ENCODE measurements at regions of chr20 and their contacts with region 1.

Region 1: DNA sequence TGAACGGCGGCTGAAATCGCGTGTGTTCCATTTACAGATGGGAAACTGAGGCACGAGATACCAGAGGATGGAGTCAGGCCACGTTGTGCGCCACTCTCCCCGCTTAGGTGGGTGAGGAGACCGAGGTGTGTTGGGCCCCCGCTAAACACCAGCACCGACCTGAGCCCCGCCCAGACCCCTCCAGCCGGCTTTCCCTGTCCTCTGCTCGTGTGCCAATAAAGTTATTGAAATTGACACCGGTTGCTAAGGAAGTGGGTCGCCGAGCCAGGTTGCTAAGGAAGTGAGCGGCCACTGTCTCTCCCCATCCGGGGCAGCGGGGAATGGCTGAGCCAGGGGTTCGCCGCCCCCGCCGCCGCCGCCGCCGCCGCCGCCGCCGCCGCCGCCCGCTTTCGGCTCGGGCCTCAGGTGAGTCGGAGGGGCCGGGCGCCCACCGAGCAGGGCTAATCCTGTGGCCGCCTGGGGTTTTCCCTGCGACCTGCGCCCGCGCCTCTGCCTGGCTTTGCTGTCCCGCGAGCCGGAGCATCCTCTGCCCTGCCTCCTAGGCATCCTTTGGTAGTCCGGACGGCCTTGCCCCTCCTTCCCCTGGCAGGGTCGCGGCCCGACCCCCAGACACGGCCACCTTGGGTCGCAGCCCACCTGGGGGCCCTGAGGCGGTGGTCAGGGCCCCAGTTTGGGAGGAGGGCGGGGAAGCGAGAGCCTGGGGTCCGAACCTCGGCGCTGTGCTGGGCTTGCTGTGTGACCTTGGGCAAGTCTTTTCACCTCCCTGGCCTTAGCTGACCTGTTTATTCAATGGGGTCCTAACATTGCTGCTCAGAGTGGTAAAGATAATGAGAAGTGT is at the start of gene KIF3B:
- DNase-seq: peak; percentile 72 to 90
- H3K4me3 ChIP-seq: peak within 1 kb of the TSS; percentile 98
- H3K27ac ChIP-seq: no peak within 1 kb of the TSS
- H3K4me1 ChIP-seq: peaks cover 7% of the 10 kb centered on the region; the same call in 1 of the 2 replicates
- H3K27me3 ChIP-seq: no peaks in the 10 kb centered on the region
- CTCF ChIP-seq: no peak
- total RNA-seq, gene KIF3B: 41.4 and 52.3 TPM in 2 replicates

Region 2: GRCh38 chr20:31723319-31724078 is 554.1 kb before region 1 on chr20:
- CTCF ChIA-PET with region 1: no interaction called
- POLR2A ChIA-PET with region 1: no interaction called
- intact Hi-C with region 1: no loop called
- DNase-seq: peak; percentile 86 to 99
- H3K4me3 ChIP-seq: peak overlapping the region; percentile 88
- H3K27ac ChIP-seq: peak overlapping the region; percentile 99
- H3K4me1 ChIP-seq: peaks cover 19% of the 10 kb centered on the region
- H3K27me3 ChIP-seq: no peaks in the 10 kb centered on the region
- CTCF ChIP-seq: peak; percentile 94

Region 3: DNA sequence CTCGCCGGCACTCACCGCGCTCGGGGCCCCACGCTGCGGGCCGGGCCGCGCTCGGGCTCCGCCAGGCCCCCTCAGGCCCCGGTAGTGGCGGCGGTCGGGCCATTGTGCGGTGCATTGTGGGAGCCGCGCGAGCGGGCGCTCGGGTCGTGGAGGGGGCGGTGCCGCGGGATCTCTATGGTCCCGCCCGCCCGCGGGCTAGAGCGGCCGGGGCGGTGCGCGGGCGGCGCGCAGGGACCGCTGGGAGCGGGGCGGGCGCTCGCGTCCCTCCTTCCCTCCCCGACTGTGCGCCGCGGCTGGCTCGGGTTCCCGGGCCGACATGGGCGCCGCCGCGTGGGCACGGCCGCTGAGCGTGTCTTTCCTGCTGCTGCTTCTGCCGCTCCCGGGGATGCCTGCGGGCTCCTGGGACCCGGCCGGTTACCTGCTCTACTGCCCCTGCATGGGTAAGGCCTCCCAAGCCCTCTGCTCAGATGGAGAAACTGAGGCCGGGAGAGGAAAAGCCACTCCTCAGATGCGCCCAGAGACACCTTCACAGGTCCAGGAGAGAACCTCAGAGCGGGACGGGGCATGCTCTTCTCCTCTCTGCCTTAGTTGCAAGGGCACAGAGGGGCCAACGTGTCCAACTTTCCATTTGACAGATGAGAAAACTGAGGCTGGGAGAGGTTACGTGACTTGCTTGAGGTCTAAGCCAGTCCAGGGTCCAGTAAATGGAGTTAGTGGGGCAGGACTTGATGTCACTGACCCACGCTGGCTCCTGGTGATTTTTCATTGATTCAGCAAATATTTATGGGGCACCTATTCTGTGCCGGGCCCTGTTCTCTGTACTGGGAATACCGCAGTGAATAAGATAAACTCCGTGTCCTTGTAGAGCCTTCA is 69.7 kb before region 1 on chr20 and contains the starts of genes PLAGL2 and POFUT1:
- CTCF ChIA-PET with region 1: interaction called, 10 read pairs
- POLR2A ChIA-PET with region 1: no interaction called
- intact Hi-C with region 1: loop called (anchors 5 kb)
- DNase-seq: peak; percentile 56 to 94
- H3K4me3 ChIP-seq: peak within 1 kb of the TSS; percentile 95
- H3K27ac ChIP-seq: peak within 1 kb of the TSS; percentile 35; the same call in 1 of the 2 replicates
- H3K4me1 ChIP-seq: peaks cover 41% of the 10 kb centered on the region
- H3K27me3 ChIP-seq: no peaks in the 10 kb centered on the region
- CTCF ChIP-seq: no peak; the same call in 1 of the 2 replicates
- total RNA-seq, gene PLAGL2: 17.5 and 23.8 TPM in 2 replicates
- total RNA-seq, gene POFUT1: 38.1 and 51.3 TPM in 2 replicates

Region 4: DNA sequence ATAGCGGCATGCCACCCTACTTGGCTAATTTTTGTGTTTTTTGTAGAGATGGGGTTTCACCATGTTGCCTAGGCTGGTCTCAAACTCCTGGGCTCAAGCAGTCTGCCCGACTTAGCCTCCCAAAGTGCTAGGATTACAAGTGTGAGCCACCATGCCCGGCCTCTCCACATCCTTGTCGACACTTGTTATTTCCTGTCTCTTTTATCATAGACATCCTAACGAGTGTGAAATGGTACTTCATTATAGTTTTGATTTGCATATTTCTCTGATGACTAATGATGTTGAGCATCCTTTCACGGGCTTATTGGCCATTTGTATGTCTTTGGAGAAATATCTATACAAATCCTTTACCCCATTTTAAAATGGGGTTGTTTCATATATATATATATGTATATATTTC is 41.5 kb after region 1 on chr20:
- CTCF ChIA-PET with region 1: no interaction called
- POLR2A ChIA-PET with region 1: no interaction called
- intact Hi-C with region 1: no loop called
- DNase-seq: no peak
- H3K4me3 ChIP-seq: no peak overlapping the region
- H3K27ac ChIP-seq: no peak overlapping the region
- H3K4me1 ChIP-seq: no peaks in the 10 kb centered on the region
- H3K27me3 ChIP-seq: no peaks in the 10 kb centered on the region
- CTCF ChIP-seq: no peak